ENCODE measurements at regions of chr4 and their contacts with region 1.

Region 1: GRCh38 chr4:104966349-104967033 is 180.2 kb upstream of the TET2 start:
- DNase-seq: peak; percentile 38
- H3K4me3 Mint-ChIP-seq: peak overlapping the region; percentile 48
- H3K27ac Mint-ChIP-seq: peak overlapping the region; percentile 83
- H3K4me1 Mint-ChIP-seq: peaks cover 53% of the 10 kb centered on the region
- H3K27me3 Mint-ChIP-seq: no peaks in the 10 kb centered on the region
- CTCF ChIP-seq: no peak

Region 2: GRCh38 chr4:104641427-104641826 is 325.1 kb before region 1 on chr4:
- CTCF ChIA-PET with region 1: no interaction called
- intact Hi-C with region 1: no loop called
- DNase-seq: no peak
- H3K4me3 Mint-ChIP-seq: no peak overlapping the region
- H3K27ac Mint-ChIP-seq: no peak overlapping the region
- H3K4me1 Mint-ChIP-seq: no peaks in the 10 kb centered on the region
- H3K27me3 Mint-ChIP-seq: no peaks in the 10 kb centered on the region
- CTCF ChIP-seq: no peak

Region 3: GRCh38 chr4:104941661-104942062 is 24.8 kb before region 1 on chr4:
- CTCF ChIA-PET with region 1: interaction called, 3 read pairs
- intact Hi-C with region 1: loop called (anchors 1 kb)
- DNase-seq: no peak
- H3K4me3 Mint-ChIP-seq: no peak overlapping the region
- H3K27ac Mint-ChIP-seq: peak overlapping the region; percentile 54
- H3K4me1 Mint-ChIP-seq: peaks cover 23% of the 10 kb centered on the region
- H3K27me3 Mint-ChIP-seq: no peaks in the 10 kb centered on the region
- CTCF ChIP-seq: no peak

Region 4: DNA sequence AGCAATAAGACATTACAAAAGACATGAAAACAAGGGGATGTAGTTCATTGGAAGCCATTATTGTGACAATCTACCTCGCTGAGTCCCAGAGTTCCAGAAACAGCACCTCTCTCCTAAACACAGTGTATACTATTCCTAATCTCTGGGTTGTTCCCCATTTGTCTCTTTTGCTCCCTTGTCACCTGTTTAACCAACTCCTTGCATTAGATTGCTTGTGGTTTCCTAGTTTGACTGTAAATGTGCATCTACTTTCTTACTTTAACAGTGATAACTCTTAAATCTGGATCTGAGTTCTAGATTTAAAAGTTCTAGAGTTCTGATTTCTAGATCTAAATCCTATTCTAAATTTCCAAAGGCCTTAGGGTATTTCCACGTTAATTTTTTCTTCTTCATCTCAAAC is 108.6 kb after region 1 on chr4:
- CTCF ChIA-PET with region 1: no interaction called
- intact Hi-C with region 1: no loop called
- DNase-seq: no peak
- H3K4me3 Mint-ChIP-seq: no peak overlapping the region
- H3K27ac Mint-ChIP-seq: no peak overlapping the region
- H3K4me1 Mint-ChIP-seq: no peaks in the 10 kb centered on the region
- H3K27me3 Mint-ChIP-seq: no peaks in the 10 kb centered on the region
- CTCF ChIP-seq: no peak

Region 5: DNA sequence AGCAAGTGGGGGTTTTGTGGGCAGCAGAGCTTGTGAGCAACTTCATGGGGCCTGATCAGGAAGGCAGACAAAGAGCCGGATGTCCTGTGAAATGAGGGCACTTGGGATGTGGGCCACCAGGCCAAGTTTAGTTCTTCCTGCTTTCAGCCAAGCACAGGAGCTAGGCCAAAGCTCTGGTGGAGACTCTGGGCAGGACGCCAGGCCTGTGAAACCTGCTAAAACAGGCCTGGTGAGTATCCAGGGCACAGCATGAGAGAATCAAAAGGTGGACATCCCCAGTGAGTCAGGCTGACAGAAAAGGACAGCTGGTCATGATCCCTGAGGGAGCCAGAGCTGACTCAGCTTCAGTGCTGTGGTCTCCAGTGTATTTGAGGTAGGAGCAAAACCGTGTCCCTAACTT is 1024.4 kb after region 1 on chr4:
- CTCF ChIA-PET with region 1: no interaction called
- intact Hi-C with region 1: no loop called
- DNase-seq: peak; percentile 86
- H3K4me3 Mint-ChIP-seq: no peak overlapping the region
- H3K27ac Mint-ChIP-seq: peak overlapping the region; percentile 61
- H3K4me1 Mint-ChIP-seq: peaks cover 16% of the 10 kb centered on the region
- H3K27me3 Mint-ChIP-seq: no peaks in the 10 kb centered on the region
- CTCF ChIP-seq: no peak

Measured in Calu3 (cell line).